ENCODE measurements at regions of chr12 and their contacts with region 1.

Region 1: DNA sequence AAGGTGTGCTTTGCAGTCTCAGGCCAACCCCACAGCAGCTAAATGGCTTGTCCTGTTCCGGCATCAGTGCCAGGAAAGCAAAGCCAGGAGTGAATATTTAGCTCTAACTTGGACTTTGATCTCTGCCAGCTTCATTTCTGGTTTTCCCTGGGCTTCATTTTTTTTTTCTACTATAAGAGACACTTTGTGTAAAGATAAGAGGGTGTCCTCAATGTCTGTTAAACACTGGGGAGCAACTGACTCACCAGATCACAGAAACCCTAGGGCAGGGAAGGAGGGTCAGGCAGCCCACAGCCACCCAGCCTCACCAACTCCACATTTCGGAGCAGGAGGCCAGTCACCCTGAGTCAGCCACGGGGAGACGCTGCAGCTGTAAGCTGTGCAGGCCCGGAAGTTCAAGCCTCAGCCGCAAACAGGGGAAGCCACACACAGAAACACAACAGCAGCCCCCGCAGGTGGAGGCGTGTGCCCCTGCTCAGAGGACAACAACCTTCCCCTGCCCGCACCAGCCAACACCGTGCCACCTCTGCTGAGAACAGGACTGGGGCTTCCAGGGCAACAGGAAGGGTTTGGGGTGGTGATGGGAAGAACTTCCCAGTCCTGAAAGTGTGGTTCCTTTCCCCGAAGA is 6.3 kb downstream of the TNFRSF1A start:
- DNase-seq: peak; percentile 60
- ATAC-seq: peak; percentile 85
- H3K4me3 ChIP-seq: peak overlapping the region; percentile 53
- H3K27ac ChIP-seq: peak overlapping the region; percentile 93
- H3K4me1 ChIP-seq: peaks cover 45% of the 10 kb centered on the region
- H3K27me3 ChIP-seq: no peaks in the 10 kb centered on the region
- CTCF ChIP-seq: peak; percentile 71 to 92 (median 76)
- EP300 ChIP-seq: no peak; a peak in 1 of 4 replicates
- POLR2A ChIP-seq: peak; percentile 83
- RAD21 ChIP-seq: peak; percentile 75

Region 2: DNA sequence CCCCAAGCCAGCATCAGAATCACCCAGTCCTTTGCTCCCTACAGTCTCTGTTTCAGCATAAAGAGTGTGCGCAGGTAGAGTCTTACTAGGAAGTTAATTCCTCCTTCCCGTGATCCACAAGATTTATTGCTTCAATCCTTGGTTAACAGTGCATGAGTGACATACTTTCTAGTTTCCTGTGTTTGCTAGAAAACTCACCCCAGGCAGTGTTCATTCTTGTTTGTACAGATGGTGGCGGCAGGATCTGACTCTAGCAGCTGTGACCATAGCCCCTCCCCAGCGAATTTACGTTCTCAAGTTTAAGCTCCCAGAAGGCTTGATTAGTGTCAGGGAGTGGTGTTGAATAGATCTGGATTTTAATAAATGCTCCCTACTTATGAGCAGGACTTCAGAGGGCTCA is 314.6 kb before region 1 on chr12:
- CTCF ChIA-PET with region 1: no interaction called
- POLR2A ChIA-PET with region 1: no interaction called
- RAD21 ChIA-PET with region 1: no interaction called
- SMC1A ChIA-PET with region 1: no interaction called
- in situ Hi-C with region 1: no loop called
- intact Hi-C with region 1: no loop called
- DNase-seq: no peak
- ATAC-seq: no peak
- H3K4me3 ChIP-seq: no peak overlapping the region
- H3K27ac ChIP-seq: no peak overlapping the region
- H3K4me1 ChIP-seq: no peaks in the 10 kb centered on the region
- H3K27me3 ChIP-seq: no peaks in the 10 kb centered on the region; a peak in 1 of 4 replicates
- CTCF ChIP-seq: no peak
- EP300 ChIP-seq: no peak
- POLR2A ChIP-seq: no peak
- RAD21 ChIP-seq: no peak

Region 3: GRCh38 chr12:6253278-6253677 is 82.3 kb before region 1 on chr12:
- CTCF ChIA-PET with region 1: no interaction called
- POLR2A ChIA-PET with region 1: no interaction called
- RAD21 ChIA-PET with region 1: no interaction called
- SMC1A ChIA-PET with region 1: no interaction called
- in situ Hi-C with region 1: no loop called
- intact Hi-C with region 1: no loop called
- DNase-seq: no peak
- ATAC-seq: no peak
- H3K4me3 ChIP-seq: no peak overlapping the region
- H3K27ac ChIP-seq: no peak overlapping the region
- H3K4me1 ChIP-seq: no peaks in the 10 kb centered on the region
- H3K27me3 ChIP-seq: peaks cover 0 to 6% of the 10 kb centered on the region in 2 experiments; a peak in 2 of 4 replicates
- CTCF ChIP-seq: no peak
- EP300 ChIP-seq: no peak
- POLR2A ChIP-seq: no peak
- RAD21 ChIP-seq: no peak

Region 4: GRCh38 chr12:6323340-6323994 is 12.1 kb before region 1 on chr12:
- CTCF ChIA-PET with region 1: interaction called, 48 read pairs
- POLR2A ChIA-PET with region 1: interaction called, 15 read pairs
- RAD21 ChIA-PET with region 1: interaction called, 23 read pairs
- SMC1A ChIA-PET with region 1: interaction called, 32 read pairs
- in situ Hi-C with region 1: no loop called
- intact Hi-C with region 1: no loop called
- DNase-seq: peak; percentile 71
- ATAC-seq: peak; percentile 87
- H3K4me3 ChIP-seq: no peak overlapping the region
- H3K27ac ChIP-seq: peak overlapping the region; percentile 79
- H3K4me1 ChIP-seq: peaks cover 31% of the 10 kb centered on the region
- H3K27me3 ChIP-seq: no peaks in the 10 kb centered on the region
- CTCF ChIP-seq: peak; percentile 38 to 45 (median 45); a peak in 5 of 6 replicates
- EP300 ChIP-seq: peak; percentile 46 to 53; a peak in 1 of 4 replicates
- POLR2A ChIP-seq: 0 out of 2 replicates have a peak, but pooled peaks have one; percentile 18
- RAD21 ChIP-seq: peak; percentile 34

Region 5: DNA sequence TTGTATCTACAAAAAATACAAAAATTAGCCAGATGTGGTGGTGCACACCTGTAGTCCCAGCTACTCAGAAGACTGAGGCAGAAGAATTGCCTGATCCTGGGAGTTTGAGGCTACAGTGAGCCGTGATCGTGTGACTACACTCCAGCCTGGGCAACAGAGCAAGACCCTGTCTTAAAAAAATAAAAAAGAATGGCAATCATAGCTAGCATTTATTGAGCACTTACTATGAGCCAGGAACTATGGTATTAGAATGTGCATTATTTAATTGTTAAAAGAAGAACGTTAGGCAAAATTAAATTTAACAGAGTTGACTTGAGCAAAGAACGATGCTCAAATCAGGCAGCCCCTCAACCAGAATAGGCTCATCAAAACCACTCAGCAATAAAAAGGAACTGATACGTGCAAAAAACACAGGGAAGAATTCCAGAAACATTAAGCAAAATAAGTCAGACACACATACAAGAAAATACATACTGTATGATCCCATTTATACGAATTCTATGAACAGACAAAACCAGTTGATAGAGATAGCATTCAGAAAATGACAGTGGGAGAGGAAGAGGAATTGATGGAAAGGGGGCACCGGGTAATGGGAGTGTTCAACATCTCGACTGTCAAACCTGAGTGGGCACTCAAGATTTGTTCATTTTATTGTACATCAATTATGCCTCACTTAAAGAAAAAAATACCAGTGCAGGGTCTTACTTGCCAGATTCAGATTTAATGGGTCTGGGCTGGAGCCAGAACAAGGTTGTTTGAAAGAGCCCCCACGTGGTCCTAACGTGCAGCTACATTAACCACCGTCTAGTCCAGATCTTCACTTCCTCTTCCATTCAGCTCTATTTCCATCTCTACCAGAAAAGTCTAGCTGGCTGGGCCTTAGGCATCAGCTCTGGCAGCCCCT is 31.8 kb after region 1 on chr12:
- CTCF ChIA-PET with region 1: interaction called, 37 read pairs
- POLR2A ChIA-PET with region 1: interaction called, 6 read pairs
- RAD21 ChIA-PET with region 1: interaction called, 19 read pairs
- SMC1A ChIA-PET with region 1: interaction called, 26 read pairs
- in situ Hi-C with region 1: no loop called
- intact Hi-C with region 1: no loop called
- DNase-seq: peak; percentile 39
- ATAC-seq: peak; percentile 94
- H3K4me3 ChIP-seq: no peak overlapping the region
- H3K27ac ChIP-seq: no peak overlapping the region
- H3K4me1 ChIP-seq: peaks cover 13% of the 10 kb centered on the region; the same call in 1 of the 2 replicates
- H3K27me3 ChIP-seq: no peaks in the 10 kb centered on the region
- CTCF ChIP-seq: peak; percentile 40 to 46 (median 41); a peak in 5 of 6 replicates
- EP300 ChIP-seq: no peak
- POLR2A ChIP-seq: no peak
- RAD21 ChIP-seq: peak; percentile 36; the same call in 1 of the 2 replicates

Region 6: GRCh38 chr12:6451348-6452244 is 116.0 kb after region 1 on chr12 and contains the start of gene TAPBPL:
- CTCF ChIA-PET with region 1: interaction called, 5 read pairs
- POLR2A ChIA-PET with region 1: interaction called, 17 read pairs
- RAD21 ChIA-PET with region 1: interaction called, 5 read pairs
- SMC1A ChIA-PET with region 1: no interaction called
- in situ Hi-C with region 1: no loop called
- intact Hi-C with region 1: no loop called
- DNase-seq: peak; percentile 75
- ATAC-seq: peak; percentile 84
- H3K4me3 ChIP-seq: peak within 1 kb of the TSS; percentile 83
- H3K27ac ChIP-seq: peak within 1 kb of the TSS; percentile 98
- H3K4me1 ChIP-seq: peaks cover 38% of the 10 kb centered on the region
- H3K27me3 ChIP-seq: no peaks in the 10 kb centered on the region
- CTCF ChIP-seq: no peak
- EP300 ChIP-seq: peak; percentile 18 to 46; a peak in 1 of 4 replicates
- POLR2A ChIP-seq: peak; percentile 82
- RAD21 ChIP-seq: no peak
- polyA plus RNA-seq, gene TAPBPL: 12.4 to 20.9 TPM

Region 7: DNA sequence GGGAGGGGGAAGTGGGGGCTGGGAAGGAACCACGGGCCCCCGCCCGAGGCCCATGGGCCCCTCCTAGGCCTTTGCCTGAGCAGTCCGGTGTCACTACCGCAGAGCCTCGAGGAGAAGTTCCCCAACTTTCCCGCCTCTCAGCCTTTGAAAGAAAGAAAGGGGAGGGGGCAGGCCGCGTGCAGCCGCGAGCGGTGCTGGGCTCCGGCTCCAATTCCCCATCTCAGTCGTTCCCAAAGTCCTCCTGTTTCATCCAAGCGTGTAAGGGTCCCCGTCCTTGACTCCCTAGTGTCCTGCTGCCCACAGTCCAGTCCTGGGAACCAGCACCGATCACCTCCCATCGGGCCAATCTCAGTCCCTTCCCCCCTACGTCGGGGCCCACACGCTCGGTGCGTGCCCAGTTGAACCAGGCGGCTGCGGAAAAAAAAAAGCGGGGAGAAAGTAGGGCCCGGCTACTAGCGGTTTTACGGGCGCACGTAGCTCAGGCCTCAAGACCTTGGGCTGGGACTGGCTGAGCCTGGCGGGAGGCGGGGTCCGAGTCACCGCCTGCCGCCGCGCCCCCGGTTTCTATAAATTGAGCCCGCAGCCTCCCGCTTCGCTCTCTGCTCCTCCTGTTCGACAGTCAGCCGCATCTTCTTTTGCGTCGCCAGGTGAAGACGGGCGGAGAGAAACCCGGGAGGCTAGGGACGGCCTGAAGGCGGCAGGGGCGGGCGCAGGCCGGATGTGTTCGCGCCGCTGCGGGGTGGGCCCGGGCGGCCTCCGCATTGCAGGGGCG is 198.5 kb after region 1 on chr12 and contains the start of gene GAPDH:
- CTCF ChIA-PET with region 1: interaction called, 13 read pairs
- POLR2A ChIA-PET with region 1: interaction called, 4 read pairs
- RAD21 ChIA-PET with region 1: interaction called, 5 read pairs
- SMC1A ChIA-PET with region 1: interaction called, 4 read pairs
- in situ Hi-C with region 1: no loop called
- intact Hi-C with region 1: loop called (anchors 5 kb)
- DNase-seq: peak; percentile 80
- ATAC-seq: peak; percentile 76
- H3K4me3 ChIP-seq: peak within 1 kb of the TSS; percentile 83
- H3K27ac ChIP-seq: peak within 1 kb of the TSS; percentile 98
- H3K4me1 ChIP-seq: peaks cover 29% of the 10 kb centered on the region
- H3K27me3 ChIP-seq: no peaks in the 10 kb centered on the region
- CTCF ChIP-seq: no peak
- EP300 ChIP-seq: peak in 1 of 2 experiments; percentile 50; a peak in 1 of 4 replicates
- POLR2A ChIP-seq: peak; percentile 96
- RAD21 ChIP-seq: no peak
- polyA plus RNA-seq, gene GAPDH: 9,323 to 11,518 TPM

Measured in GM12878 (cell line).